Sigmoid colon (tissue), 7 donors: ENCODE measurements at regions of chr15 and their contacts with region 1.

Region 1: DNA sequence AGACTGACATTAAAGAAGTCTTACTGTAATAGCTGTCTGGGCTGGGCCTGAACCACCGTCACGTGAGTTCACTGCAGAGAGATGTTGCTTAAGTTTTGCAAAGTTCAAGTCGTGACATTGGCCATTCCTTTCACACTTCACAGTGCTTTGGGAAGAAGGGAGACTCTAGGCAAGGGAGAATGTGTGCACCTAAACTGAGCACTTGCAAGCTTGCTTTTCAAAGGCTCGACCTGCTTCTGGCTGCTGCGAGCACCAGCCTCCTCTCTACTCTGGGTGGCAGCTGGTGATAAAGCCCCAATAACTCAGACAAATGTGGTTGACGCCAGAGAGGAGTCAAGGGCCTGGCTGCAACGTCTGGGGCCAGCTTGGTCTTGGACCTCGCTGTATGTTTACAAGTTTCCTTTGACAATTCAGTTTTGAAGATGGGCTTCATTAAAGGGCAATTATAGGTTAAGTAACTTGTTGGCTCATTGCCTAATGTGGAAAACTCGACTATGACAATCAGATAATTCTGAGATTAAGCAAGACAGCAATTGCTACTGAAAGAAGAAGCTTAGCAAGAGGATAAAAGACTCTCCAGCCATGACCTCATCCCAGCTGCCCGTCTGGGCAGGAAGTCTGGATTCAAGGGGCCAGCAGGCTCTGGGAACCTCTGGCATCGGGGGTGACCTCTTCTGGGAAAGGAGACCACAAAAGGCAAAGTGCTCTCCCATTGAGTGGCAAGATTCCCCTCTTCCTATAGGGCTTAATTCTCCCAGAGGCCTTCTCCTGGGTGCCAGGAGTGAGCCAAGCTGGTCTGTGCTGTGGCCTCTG is 242.2 kb upstream of the TLE3 start:
- DNase-seq: no peak
- H3K4me3 ChIP-seq: no peak overlapping the region
- H3K27ac ChIP-seq: peak overlapping the region in 3 of 4 donors; percentile 74 to 78 (median 78)
- H3K4me1 ChIP-seq: peaks cover 0 to 36% (median 27%) of the 10 kb centered on the region in 4 donors
- H3K27me3 ChIP-seq: no peaks in the 10 kb centered on the region
- CTCF ChIP-seq: no peak
- EP300 ChIP-seq: no peak
- POLR2A ChIP-seq: no peak

Region 2: DNA sequence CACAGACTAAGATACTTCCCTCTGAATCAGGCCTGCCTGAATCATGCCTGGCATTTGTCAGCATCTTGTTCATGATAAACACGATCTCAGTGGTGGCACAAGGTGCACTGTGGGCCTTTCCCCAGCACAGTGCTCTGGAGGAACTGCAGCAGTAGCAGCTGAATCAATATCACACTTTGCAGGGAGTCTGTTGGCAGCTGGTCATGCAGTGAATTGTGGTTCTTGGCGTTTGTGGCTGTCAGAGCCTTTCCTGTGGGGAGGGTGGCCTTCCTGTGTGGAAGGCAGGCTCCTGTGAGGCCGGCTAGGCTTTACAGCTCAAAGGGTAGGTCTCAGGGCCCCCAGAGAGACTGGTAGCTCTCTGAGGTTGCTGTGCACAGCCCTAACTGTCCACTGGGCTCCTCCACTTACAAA is 187.8 kb before region 1 on chr15:
- intact Hi-C with region 1: loop called (anchors 5 kb)
- DNase-seq: peak; percentile 76
- H3K4me3 ChIP-seq: no peak overlapping the region
- H3K27ac ChIP-seq: peak overlapping the region in 3 of 4 donors; percentile 80 to 87 (median 86)
- H3K4me1 ChIP-seq: peaks cover 0 to 86% (median 56%) of the 10 kb centered on the region in 4 donors
- H3K27me3 ChIP-seq: no peaks in the 10 kb centered on the region
- CTCF ChIP-seq: no peak
- EP300 ChIP-seq: no peak
- POLR2A ChIP-seq: no peak

Region 3: DNA sequence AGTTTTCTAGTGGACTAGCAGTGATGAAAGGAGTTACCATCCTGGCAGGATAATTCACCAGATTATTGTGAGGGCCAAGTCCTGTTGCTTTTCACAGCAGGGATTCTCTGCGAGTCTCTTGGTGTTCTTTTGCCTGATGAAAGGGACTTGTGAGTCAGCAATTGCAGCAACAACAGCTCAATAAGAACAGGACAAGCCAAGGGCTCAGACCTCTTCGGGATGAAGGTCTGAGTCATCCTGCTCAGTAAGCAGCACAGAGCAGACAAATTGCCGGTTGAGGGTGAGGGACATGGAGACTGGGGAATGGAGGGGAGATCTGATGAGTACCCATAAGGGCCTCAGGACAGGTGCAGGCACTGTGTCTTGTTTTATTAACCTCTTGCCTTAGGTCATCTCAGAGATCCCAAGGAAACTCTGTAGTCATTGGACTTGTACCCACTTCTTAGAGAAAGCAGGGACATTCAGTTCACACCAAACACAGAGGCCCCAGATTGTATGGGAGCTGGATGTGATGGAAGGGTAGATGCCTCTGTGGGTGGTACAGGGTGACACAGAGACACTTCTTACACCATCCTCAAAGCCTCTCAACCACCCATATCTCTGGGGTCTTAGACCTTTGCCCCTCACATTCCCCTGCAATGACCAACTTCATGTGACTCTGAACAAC is 68.3 kb before region 1 on chr15:
- intact Hi-C with region 1: loop called (anchors 5 kb)
- DNase-seq: peak; percentile 89
- H3K4me3 ChIP-seq: no peak overlapping the region
- H3K27ac ChIP-seq: peak overlapping the region; percentile 55 to 82 (median 66)
- H3K4me1 ChIP-seq: peaks cover 0 to 52% (median 44%) of the 10 kb centered on the region in 4 donors
- H3K27me3 ChIP-seq: no peaks in the 10 kb centered on the region
- CTCF ChIP-seq: no peak
- EP300 ChIP-seq: no peak
- POLR2A ChIP-seq: no peak

Region 4: DNA sequence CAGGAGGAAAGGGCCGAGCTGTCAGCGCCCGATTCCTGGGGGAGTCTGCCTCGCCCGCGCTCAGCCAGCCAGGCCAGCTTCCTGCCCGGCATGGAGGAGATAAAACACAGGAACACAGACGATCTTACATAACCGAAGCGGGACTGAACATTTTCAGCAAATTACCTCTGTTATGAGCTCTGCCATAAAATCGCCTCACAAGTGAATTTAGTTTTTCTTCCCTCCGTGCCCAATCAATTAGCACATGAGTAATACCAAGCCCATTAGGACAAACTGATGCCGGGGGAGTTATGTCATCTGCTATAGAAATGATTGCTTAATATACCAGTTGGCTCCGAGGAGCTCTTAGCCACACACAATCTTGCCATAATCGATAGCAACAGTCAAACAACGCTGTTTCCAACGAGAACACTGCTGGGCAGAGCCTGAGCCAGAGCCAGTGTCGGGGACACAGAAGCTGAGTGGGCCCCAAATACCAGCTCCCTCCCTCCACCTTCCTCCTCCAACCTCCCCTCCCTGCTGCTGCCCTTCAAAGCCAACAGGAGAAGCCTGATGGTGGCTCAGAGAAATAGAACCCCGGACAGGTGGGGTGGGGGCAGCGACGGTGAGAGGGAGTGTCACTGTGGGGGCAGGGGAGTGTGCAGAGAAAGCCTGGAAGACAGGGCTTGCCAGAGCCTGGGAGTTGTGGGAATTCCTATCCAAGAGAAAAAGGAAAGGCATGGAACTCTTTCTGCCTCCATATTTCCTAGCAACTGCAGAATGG is 37.2 kb after region 1 on chr15:
- intact Hi-C with region 1: loop called (anchors 5 kb)
- DNase-seq: peak; percentile 83
- H3K4me3 ChIP-seq: peak overlapping the region in 2 of 4 donors; percentile 13 to 19
- H3K27ac ChIP-seq: peak overlapping the region in 3 of 4 donors; percentile 73 to 76 (median 75)
- H3K4me1 ChIP-seq: peaks cover 0 to 42% (median 32%) of the 10 kb centered on the region in 4 donors
- H3K27me3 ChIP-seq: no peaks in the 10 kb centered on the region
- CTCF ChIP-seq: no peak
- EP300 ChIP-seq: no peak
- POLR2A ChIP-seq: no peak